Dorsolateral prefrontal cortex (tissue), 120 donors: ENCODE measurements at regions of chr9 and their contacts with region 1.

Region 1: GRCh38 chr9:87497604-87498045 is at the start of gene DAPK1:
- DNase-seq: peak in 4 of 10 donors; percentile 62 to 77 (median 70)
- H3K4me3 ChIP-seq: peak within 1 kb of the TSS; percentile 20 to 82 (median 69)
- H3K27ac ChIP-seq: peak within 1 kb of the TSS in 58 of 59 donors; percentile 15 to 94 (median 83)
- H3K27me3 ChIP-seq: peaks cover 0 to 33% (median 2%) of the 10 kb centered on the region in 45 donors
- CTCF ChIP-seq: peak in 3 of 56 donors; percentile 1 to 8 (median 3)
- total RNA-seq, gene DAPK1: 51.6 to 223 (median 138) TPM

Region 2: GRCh38 chr9:87464110-87464965 is 33.3 kb before region 1 on chr9:
- intact Hi-C with region 1: loop called in 1 of 2 experiments (anchors 1 kb)
- DNase-seq: peak in 2 of 10 donors; percentile 12 to 15
- H3K4me3 ChIP-seq: no peak overlapping the region
- H3K27ac ChIP-seq: peak overlapping the region in 34 of 59 donors; percentile 3 to 78 (median 48)
- H3K27me3 ChIP-seq: no peaks in the 10 kb centered on the region
- CTCF ChIP-seq: no peak

Region 3: GRCh38 chr9:87613265-87614111 is 115.9 kb after region 1 on chr9:
- intact Hi-C with region 1: loop called in 1 of 2 experiments (anchors 10 kb)
- DNase-seq: no peak
- H3K4me3 ChIP-seq: no peak overlapping the region
- H3K27ac ChIP-seq: peak overlapping the region in 1 of 59 donors; percentile 18
- H3K27me3 ChIP-seq: no peaks in the 10 kb centered on the region
- CTCF ChIP-seq: no peak

Region 4: GRCh38 chr9:87662808-87663528 is 165.3 kb after region 1 on chr9:
- intact Hi-C with region 1: loop called in 1 of 2 experiments (anchors 10 kb)
- DNase-seq: peak in 9 of 10 donors; percentile 44 to 81 (median 58)
- H3K4me3 ChIP-seq: no peak overlapping the region
- H3K27ac ChIP-seq: peak overlapping the region in 2 of 59 donors; percentile 12 to 38
- H3K27me3 ChIP-seq: no peaks in the 10 kb centered on the region
- CTCF ChIP-seq: peak; percentile 21 to 79 (median 69)